ENCODE measurements at regions of chr17 and their contacts with region 1.

Region 1: GRCh38 chr17:81130385-81131288 is 34.7 kb upstream of the PVALEF start:
- DNase-seq: no peak
- H3K4me3 ChIP-seq: no peak overlapping the region
- H3K27ac ChIP-seq: no peak overlapping the region
- H3K27me3 ChIP-seq: no peaks in the 10 kb centered on the region
- CTCF ChIP-seq: no peak

Region 2: GRCh38 chr17:80512233-80512632 is 618.4 kb before region 1 on chr17:
- in situ Hi-C with region 1: no loop called
- DNase-seq: peak; percentile 90
- H3K4me3 ChIP-seq: no peak overlapping the region
- H3K27ac ChIP-seq: peak overlapping the region; percentile 15
- H3K27me3 ChIP-seq: no peaks in the 10 kb centered on the region
- CTCF ChIP-seq: no peak

Region 3: GRCh38 chr17:81064678-81065475 is 65.8 kb before region 1 on chr17:
- in situ Hi-C with region 1: no loop called
- DNase-seq: peak; percentile 61
- H3K4me3 ChIP-seq: no peak overlapping the region
- H3K27ac ChIP-seq: peak overlapping the region; percentile 34
- H3K27me3 ChIP-seq: no peaks in the 10 kb centered on the region
- CTCF ChIP-seq: no peak

Region 4: GRCh38 chr17:81189670-81190530 is 59.3 kb after region 1 on chr17:
- in situ Hi-C with region 1: loop called (anchors 5 kb)
- DNase-seq: no peak
- H3K4me3 ChIP-seq: no peak overlapping the region
- H3K27ac ChIP-seq: no peak overlapping the region
- H3K27me3 ChIP-seq: no peaks in the 10 kb centered on the region
- CTCF ChIP-seq: peak; percentile 42

Measured in brain microvascular endothelial cell (primary cell).